ENCODE measurements at regions of chr17 and their contacts with region 1.

Region 1: GRCh38 chr17:63549946-63550807 is at the start of gene DCAF7:
- DNase-seq: peak; percentile 100
- H3K4me3 ChIP-seq: peak within 1 kb of the TSS; percentile 94
- H3K27ac ChIP-seq: peak within 1 kb of the TSS; percentile 89
- H3K4me1 ChIP-seq: peaks cover 16% of the 10 kb centered on the region
- CTCF ChIP-seq: no peak
- total RNA-seq, gene DCAF7: 35.4 and 46.4 TPM in 2 replicates

Region 2: DNA sequence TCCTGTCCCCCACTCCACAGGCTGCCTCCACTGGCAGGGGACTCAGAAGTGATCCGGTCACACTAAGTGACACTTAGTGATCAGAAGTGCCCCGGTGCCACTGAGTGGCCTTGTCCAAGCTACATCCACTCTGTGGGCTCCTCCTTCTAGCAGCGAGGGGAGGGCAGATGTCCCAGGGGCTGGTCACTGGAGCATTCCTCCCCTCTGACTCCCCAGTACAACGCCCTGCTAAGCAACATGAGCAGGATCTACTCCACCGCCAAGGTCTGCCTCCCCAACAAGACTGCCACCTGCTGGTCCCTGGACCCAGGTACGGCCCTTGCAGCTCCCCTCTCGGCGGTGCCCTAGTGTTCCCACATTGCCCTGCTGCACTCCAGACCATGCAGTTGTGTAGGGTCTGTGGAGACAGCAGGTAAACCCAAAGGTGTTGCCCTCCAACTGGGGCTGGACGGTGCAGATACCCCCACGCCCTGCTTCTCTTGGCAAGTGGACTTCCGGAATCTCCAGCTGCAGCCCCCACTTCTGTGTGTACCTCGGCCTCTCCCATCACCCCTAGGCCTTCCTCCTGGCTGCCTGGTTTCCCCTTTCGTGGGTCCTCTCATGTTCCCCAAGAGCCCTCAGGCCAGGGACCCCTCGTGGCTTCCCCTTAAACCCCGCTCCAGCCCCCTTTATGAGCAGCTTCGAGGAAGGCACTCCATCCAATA is 71.2 kb before region 1 on chr17:
- CTCF ChIA-PET with region 1: no interaction called
- POLR2A ChIA-PET with region 1: no interaction called
- intact Hi-C with region 1: loop called (anchors 5 kb)
- DNase-seq: peak; percentile 80
- H3K4me3 ChIP-seq: no peak overlapping the region
- H3K27ac ChIP-seq: no peak overlapping the region
- H3K4me1 ChIP-seq: peaks cover 8% of the 10 kb centered on the region
- CTCF ChIP-seq: peak; percentile 86

Region 3: GRCh38 chr17:63600569-63601438 is 50.6 kb after region 1 on chr17 and contains the start of gene TACO1:
- CTCF ChIA-PET with region 1: no interaction called
- POLR2A ChIA-PET with region 1: interaction called, 7 read pairs
- intact Hi-C with region 1: loop called (anchors 1 kb)
- DNase-seq: peak; percentile 87
- H3K4me3 ChIP-seq: peak within 1 kb of the TSS; percentile 88
- H3K27ac ChIP-seq: peak within 1 kb of the TSS; percentile 8
- H3K4me1 ChIP-seq: peaks cover 17% of the 10 kb centered on the region
- CTCF ChIP-seq: no peak
- total RNA-seq, gene TACO1: 13.4 and 16.2 TPM in 2 replicates

Region 4: GRCh38 chr17:63621766-63622519 is 71.8 kb after region 1 on chr17 and contains the start of gene MAP3K3:
- CTCF ChIA-PET with region 1: no interaction called
- POLR2A ChIA-PET with region 1: interaction called, 4 read pairs
- intact Hi-C with region 1: loop called (anchors 2 kb)
- DNase-seq: peak; percentile 100
- H3K4me3 ChIP-seq: peak within 1 kb of the TSS; percentile 75
- H3K27ac ChIP-seq: peak within 1 kb of the TSS; percentile 43
- H3K4me1 ChIP-seq: peaks cover 26% of the 10 kb centered on the region
- CTCF ChIP-seq: peak; percentile 52; the same call in 1 of the 2 replicates
- total RNA-seq, gene MAP3K3: 16.5 and 26.0 TPM in 2 replicates

Region 5: DNA sequence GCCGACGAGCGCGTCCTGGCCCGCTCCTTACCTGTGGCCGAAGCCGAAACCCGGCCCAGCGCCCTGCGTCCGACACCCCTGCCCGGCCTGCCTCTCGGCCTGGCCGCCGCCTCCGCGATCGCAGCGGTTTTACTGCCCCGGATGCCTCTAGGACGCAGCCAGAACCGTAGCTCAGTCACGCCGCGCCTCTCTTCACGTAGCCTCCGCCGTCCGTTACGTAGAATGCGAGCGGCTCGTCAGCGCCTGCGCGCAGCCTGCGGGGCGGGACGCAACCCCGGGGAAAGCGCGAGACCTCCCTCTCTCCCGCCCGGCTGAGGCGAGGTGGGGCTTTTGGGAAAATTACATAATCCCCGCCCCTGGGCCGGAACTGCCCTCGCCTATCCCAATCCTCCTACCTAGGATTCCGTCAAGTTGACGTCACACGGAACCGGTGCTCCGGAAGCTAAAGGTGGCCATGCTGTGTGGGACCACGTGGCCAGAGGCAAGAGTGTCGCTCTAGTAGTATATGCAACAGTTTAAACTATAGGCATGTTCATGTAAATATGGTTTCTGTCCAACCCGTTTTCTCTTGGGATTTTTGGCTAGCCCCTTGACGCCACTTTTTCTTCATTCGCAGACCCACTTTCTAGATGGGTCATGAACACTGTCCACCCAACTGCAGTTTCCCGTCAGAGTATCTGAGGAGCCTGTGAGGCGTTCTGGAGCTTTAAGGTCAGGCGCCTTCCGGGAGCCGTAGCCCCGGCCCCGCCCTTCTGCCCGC is 223.4 kb after region 1 on chr17 and contains the start of gene CCDC47:
- CTCF ChIA-PET with region 1: no interaction called
- POLR2A ChIA-PET with region 1: no interaction called
- intact Hi-C with region 1: loop called (anchors 10 kb)
- DNase-seq: peak; percentile 99
- H3K4me3 ChIP-seq: peak within 1 kb of the TSS; percentile 90
- H3K27ac ChIP-seq: peak within 1 kb of the TSS; percentile 93
- H3K4me1 ChIP-seq: peaks cover 31% of the 10 kb centered on the region
- CTCF ChIP-seq: no peak
- total RNA-seq, gene CCDC47: 27.5 and 37.6 TPM in 2 replicates

Measured in OCI-LY7 (cell line).